ENCODE measurements at regions of chr4 and their contacts with region 1.

Region 1: GRCh38 chr4:176107695-176108094 is 42.1 kb downstream of the WDR17 start:
- DNase-seq: no peak
- H3K4me3 ChIP-seq: no peak overlapping the region
- H3K27ac ChIP-seq: no peak overlapping the region
- H3K4me1 ChIP-seq: no peaks in the 10 kb centered on the region
- H3K27me3 ChIP-seq: no peaks in the 10 kb centered on the region
- CTCF ChIP-seq: no peak
- EP300 ChIP-seq: no peak
- POLR2A ChIP-seq: no peak
- RAD21 ChIP-seq: no peak

Region 2: GRCh38 chr4:176123710-176124407 is 16.2 kb after region 1 on chr4:
- CTCF ChIA-PET with region 1: interaction called, 10 read pairs
- POLR2A ChIA-PET with region 1: no interaction called
- DNase-seq: no peak
- H3K4me3 ChIP-seq: no peak overlapping the region
- H3K27ac ChIP-seq: no peak overlapping the region
- H3K4me1 ChIP-seq: no peaks in the 10 kb centered on the region
- H3K27me3 ChIP-seq: no peaks in the 10 kb centered on the region
- CTCF ChIP-seq: peak; percentile 24 to 76 (median 59)
- EP300 ChIP-seq: no peak
- POLR2A ChIP-seq: no peak
- RAD21 ChIP-seq: peak; percentile 51 to 56

Region 3: DNA sequence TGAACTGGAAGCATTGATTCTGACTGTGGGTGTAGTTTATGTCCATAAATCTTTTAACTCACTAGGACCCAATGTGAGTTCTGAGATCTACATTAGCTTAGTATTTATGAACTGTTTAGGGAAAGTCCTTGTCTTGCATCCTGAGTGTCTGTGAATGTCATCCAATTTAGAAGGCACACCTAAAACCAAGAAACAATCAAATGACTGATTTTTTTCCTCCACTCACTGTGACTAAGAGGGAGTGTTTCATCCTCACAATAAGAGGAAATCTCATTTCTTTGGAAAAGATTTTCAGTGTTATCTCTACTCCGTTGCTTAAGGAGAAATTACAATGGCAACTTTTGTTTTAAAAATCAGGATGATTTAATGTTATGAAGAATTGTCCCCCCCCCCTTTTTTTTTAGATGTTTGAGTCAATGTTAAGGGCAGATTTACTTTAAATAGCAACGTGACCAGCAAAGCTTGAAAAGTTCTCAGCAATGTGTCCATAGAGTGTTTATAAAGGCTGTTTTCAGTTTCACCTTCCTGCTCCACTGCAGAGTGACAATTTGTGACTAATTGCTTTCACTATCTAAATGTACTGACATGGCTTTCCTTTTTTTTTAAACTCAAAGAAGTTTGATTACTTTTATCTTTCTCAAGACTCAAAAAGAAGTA is 385.1 kb after region 1 on chr4:
- CTCF ChIA-PET with region 1: no interaction called
- POLR2A ChIA-PET with region 1: no interaction called
- DNase-seq: no peak
- H3K4me3 ChIP-seq: no peak overlapping the region
- H3K27ac ChIP-seq: no peak overlapping the region
- H3K4me1 ChIP-seq: no peaks in the 10 kb centered on the region
- H3K27me3 ChIP-seq: no peaks in the 10 kb centered on the region
- CTCF ChIP-seq: no peak
- EP300 ChIP-seq: no peak
- POLR2A ChIP-seq: no peak
- RAD21 ChIP-seq: no peak

Measured in H1 (cell line).